ENCODE measurements at regions of chr1 and their contacts with region 1.

Region 1: DNA sequence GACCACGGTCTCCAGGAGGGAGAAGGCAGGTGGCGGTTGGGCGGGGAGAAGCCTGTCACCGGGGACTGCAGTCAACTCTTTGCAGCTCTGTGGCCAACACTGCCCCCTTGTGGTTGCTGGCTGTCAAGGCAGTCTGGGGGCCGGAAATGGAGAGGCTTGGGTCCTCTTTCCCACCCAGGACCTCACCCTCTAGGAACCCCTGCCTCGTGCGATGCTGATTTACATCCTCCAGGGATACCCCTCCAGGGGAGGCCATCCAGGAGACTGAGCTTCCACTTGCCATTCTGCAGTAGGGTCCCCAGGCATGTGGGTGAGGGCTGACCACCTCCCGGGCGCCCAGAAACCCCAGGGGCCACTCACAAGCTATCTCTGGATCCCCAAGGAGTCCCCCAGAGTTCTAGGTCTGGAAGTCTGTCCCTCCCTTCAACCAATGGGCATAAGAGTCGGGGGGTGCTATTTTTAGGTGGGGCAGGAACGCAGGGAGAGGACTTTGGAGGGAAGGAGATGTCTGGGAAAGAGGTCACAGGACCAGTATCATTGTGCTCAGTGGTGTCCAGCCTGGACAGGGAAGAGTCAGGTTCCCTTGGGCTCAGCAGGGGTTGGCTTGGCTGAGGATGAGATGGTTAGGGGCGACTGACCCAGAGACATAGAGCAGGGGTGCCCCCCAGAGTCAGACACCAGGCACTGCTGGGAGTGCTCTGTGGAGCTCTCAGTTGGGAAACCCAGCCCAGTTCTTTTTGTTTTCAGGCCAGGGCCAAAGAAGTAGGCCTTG is 7.1 kb upstream of the GPR61 start:
- DNase-seq: peak; percentile 93
- ATAC-seq: peak; percentile 93
- H3K4me3 Mint-ChIP-seq: peak overlapping the region; percentile 57
- H3K27ac Mint-ChIP-seq: peak overlapping the region; percentile 90
- H3K4me1 Mint-ChIP-seq: peaks cover 23% of the 10 kb centered on the region
- H3K27me3 Mint-ChIP-seq: no peaks in the 10 kb centered on the region
- CTCF ChIP-seq: peak; percentile 79

Region 2: GRCh38 chr1:109213785-109214468 is 318.6 kb before region 1 on chr1 and contains the start of gene SARS1:
- CTCF ChIA-PET with region 1: interaction called, 10 read pairs
- POLR2A ChIA-PET with region 1: interaction called, 3 read pairs
- intact Hi-C with region 1: no loop called
- DNase-seq: peak; percentile 89
- ATAC-seq: peak; percentile 86
- H3K4me3 Mint-ChIP-seq: peak within 1 kb of the TSS; percentile 100
- H3K27ac Mint-ChIP-seq: peak within 1 kb of the TSS; percentile 99
- H3K4me1 Mint-ChIP-seq: peaks cover 29% of the 10 kb centered on the region
- H3K27me3 Mint-ChIP-seq: no peaks in the 10 kb centered on the region
- CTCF ChIP-seq: no peak
- total RNA-seq, gene SARS1: 226 to 228 TPM

Region 3: GRCh38 chr1:109282952-109283747 is 249.4 kb before region 1 on chr1 and contains the start of gene PSRC1:
- CTCF ChIA-PET with region 1: interaction called, 36 read pairs
- POLR2A ChIA-PET with region 1: no interaction called
- intact Hi-C with region 1: loop called (anchors 5 kb)
- DNase-seq: peak; percentile 93
- ATAC-seq: peak; percentile 98
- H3K4me3 Mint-ChIP-seq: peak within 1 kb of the TSS; percentile 79
- H3K27ac Mint-ChIP-seq: peak within 1 kb of the TSS; percentile 90
- H3K4me1 Mint-ChIP-seq: peaks cover 11% of the 10 kb centered on the region
- H3K27me3 Mint-ChIP-seq: no peaks in the 10 kb centered on the region
- CTCF ChIP-seq: peak; percentile 58
- total RNA-seq, gene PSRC1: 12.9 to 14.0 TPM

Region 4: DNA sequence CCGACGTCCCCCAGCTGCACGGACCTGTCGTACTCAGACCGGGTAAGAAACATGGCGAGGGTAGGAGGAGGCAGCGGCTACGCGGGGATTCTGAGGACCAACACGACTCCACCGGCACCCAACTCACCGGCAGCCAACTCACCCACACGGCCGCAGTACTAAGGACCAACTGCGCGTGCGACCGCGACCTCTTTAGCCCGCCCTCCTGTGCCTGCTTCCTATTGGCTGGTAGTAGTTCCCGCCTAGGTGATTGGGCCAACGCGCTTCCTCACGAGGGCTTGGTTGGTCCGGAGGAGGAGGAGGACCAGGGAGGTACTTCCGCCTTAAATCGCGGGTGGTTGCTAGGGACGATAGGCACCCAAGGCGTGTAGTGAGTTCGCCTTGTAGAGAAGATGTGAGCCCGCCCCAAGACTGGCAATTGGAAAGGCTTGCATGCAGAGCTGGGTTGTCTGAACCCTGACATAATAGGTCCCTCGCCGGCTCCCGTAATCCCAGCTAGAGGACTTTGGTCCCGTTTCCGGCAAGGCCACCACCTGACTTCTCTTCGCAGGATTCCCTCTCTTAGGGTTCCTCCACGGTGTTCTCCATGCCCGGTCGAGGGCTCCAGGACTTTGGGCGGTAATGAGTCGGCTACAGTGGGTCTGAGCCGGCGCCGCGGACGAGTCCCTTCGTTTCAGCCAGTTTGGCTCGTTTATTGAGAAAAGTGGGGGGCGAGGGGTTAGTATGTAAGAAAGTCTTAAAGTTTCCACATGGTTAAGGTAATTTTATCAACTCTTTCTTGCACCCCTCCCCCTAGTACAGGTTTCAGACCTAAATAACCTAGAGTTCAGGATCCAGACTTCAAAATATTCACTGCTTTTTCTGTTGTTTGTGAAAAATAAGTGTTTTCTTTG is 106.0 kb before region 1 on chr1 and contains the start of gene PSMA5:
- CTCF ChIA-PET with region 1: interaction called, 55 read pairs
- POLR2A ChIA-PET with region 1: interaction called, 8 read pairs
- intact Hi-C with region 1: loop called (anchors 10 kb)
- DNase-seq: peak; percentile 98
- ATAC-seq: peak; percentile 94
- H3K4me3 Mint-ChIP-seq: peak within 1 kb of the TSS; percentile 93
- H3K27ac Mint-ChIP-seq: peak within 1 kb of the TSS; percentile 96
- H3K4me1 Mint-ChIP-seq: peaks cover 28% of the 10 kb centered on the region
- H3K27me3 Mint-ChIP-seq: no peaks in the 10 kb centered on the region
- CTCF ChIP-seq: no peak
- total RNA-seq, gene PSMA5: 192 to 210 TPM

Region 5: DNA sequence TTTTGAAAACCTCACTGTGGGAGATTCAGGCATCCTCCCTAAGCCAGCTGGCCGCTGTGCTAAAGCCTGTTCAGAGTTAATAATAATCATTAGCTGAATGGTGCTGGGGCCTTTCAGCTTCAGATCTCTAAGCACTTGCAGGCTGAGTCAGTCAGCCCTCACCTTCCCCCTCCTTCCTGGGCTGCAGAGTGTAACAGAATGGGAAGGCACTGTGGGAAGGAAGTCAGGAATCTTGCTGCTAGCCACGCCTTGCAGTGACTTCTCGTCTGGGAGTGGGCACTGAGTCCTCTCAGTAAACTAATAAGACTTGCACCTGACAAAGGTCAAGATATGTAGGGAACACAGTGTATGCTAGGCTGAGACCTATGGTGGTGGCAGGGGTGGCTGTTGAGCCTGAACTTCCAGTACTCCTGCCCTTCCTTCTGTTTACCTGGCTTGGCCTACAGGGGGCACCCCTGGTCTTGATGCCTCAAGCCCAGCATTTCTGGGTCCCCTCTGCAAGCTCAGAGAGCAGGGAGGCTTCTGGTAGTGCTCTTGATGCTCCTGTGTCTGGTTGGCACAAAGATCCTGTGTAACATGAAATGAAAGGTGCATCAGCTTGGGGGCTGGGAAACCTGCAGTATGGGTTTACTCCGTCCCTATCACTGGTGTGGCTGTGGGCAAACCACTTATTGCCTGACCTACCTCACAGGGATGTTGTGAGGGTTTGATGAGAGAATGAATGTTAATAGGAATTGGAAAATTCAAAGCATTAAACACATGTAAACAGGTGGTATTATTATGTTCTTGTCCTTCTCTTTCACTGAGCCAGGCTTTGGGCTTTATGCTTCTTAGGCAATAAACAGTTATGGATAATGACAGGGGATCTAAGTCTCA is 32.7 kb before region 1 on chr1:
- CTCF ChIA-PET with region 1: interaction called, 1,390 read pairs
- POLR2A ChIA-PET with region 1: interaction called, 24 read pairs
- intact Hi-C with region 1: no loop called
- DNase-seq: peak; percentile 77
- ATAC-seq: peak; percentile 37
- H3K4me3 Mint-ChIP-seq: no peak overlapping the region
- H3K27ac Mint-ChIP-seq: peak overlapping the region; percentile 79
- H3K4me1 Mint-ChIP-seq: peaks cover 86% of the 10 kb centered on the region
- H3K27me3 Mint-ChIP-seq: no peaks in the 10 kb centered on the region
- CTCF ChIP-seq: peak; percentile 64

Region 6: DNA sequence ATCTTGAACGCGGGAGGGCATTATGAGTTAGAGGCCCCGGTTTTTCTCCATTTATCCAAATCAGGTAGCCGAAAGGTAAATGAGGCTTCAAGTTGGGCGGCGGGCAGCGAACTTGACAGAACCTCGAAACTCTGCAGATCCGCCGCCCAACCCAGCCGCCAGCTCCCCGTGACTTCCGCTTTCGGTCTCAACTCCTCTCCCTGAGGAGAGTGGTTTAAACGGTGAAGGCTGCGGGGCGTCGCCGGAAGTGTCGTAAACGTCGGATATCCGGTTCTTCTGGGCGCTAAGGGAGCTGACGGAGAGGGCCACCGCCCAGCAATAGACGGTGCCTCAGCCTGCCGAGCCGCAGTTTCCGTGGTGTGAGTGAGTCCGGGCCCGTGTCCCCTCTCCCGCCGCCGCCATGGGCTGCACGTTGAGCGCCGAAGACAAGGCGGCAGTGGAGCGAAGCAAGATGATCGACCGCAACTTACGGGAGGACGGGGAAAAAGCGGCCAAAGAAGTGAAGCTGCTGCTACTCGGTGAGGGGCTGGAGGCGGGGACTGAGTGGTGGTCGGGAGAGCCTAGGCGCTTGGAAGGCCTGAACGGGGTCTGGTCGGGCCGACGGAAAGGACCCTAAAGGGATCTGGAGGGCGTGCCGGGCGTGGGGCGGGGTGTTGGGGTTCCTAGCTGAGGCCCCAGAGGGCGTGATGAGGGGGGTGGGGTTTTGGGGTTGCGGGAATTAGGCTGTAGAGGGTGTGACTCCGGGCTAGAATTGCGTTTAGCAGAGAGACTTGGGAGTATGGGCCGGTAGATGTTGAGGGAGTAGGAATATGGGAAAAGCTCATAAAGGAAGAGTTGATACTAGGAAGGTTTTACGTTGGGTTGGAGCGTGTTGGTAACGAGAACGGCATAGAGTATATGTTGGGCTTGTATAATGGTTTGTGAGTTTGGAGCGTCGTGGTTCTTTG is 16.0 kb after region 1 on chr1 and contains the start of gene GNAI3:
- CTCF ChIA-PET with region 1: interaction called, 61 read pairs
- POLR2A ChIA-PET with region 1: interaction called, 5 read pairs
- intact Hi-C with region 1: no loop called
- DNase-seq: peak; percentile 98
- ATAC-seq: peak; percentile 95
- H3K4me3 Mint-ChIP-seq: peak within 1 kb of the TSS; percentile 98
- H3K27ac Mint-ChIP-seq: peak within 1 kb of the TSS; percentile 96
- H3K4me1 Mint-ChIP-seq: peaks cover 40% of the 10 kb centered on the region
- H3K27me3 Mint-ChIP-seq: no peaks in the 10 kb centered on the region
- CTCF ChIP-seq: no peak
- total RNA-seq, gene GNAI3: 7.5 to 7.7 TPM

Region 7: DNA sequence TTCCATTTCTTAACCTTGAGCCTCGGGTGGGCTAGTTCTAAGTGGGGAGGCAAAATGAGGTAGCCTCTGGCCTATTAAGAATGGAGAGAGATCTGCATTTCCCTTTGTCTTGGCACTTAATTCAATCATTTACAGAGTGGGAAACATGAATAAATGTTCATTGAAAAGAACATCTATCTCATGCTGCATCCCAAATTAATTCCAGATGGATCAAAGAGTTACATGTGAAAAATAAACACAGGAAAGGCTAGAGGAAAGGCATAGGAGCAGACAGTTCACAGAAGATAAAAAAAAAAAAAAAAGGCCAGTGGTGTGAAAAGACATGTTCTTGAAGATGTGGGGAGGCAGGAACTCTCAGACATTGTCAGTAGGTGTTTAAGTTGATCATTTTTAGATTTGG is 266.9 kb after region 1 on chr1:
- CTCF ChIA-PET with region 1: no interaction called
- POLR2A ChIA-PET with region 1: no interaction called
- intact Hi-C with region 1: no loop called
- DNase-seq: no peak
- ATAC-seq: no peak
- H3K4me3 Mint-ChIP-seq: no peak overlapping the region
- H3K27ac Mint-ChIP-seq: peak overlapping the region; percentile 32
- H3K4me1 Mint-ChIP-seq: peaks cover 75% of the 10 kb centered on the region
- H3K27me3 Mint-ChIP-seq: no peaks in the 10 kb centered on the region
- CTCF ChIP-seq: no peak

Measured in activated CD8-positive, alpha-beta T cell treated with anti-CD3 and anti-CD28 coated beads for 36 hours (primary cell).